GM12878 (cell line): ENCODE measurements at regions of chr1 and their contacts with region 1.

Region 1: DNA sequence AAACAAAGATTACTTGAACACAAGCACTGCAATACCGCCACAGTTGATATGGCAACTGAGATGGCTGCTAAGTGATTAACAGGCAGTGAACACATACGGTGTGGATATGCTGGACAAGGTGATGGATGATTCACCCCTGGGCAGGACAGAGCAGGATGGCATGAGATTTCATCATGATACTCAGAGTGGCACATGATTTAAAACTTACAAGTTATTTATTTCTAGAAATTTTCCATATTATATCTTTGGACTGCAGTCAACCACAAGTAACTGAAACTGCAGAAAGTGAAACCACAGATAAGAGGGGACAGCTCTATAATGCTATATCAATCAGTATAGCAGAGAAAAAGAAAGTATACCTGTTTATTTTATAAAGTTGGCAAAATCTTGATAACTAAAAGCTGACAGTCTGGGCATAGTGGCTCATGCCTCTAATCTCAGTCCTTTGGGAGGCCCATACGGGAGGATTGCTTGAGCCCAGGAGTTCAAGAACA is 47.9 kb downstream of the PHACTR4 start:
- DNase-seq: no peak
- ATAC-seq: peak; percentile 94
- H3K4me3 ChIP-seq: peak overlapping the region; percentile 48; the same call in 1 of the 2 replicates
- H3K27ac ChIP-seq: peak overlapping the region; percentile 50; the same call in 1 of the 2 replicates
- H3K4me1 ChIP-seq: peaks cover 7% of the 10 kb centered on the region
- H3K27me3 ChIP-seq: no peaks in the 10 kb centered on the region
- CTCF ChIP-seq: no peak
- EP300 ChIP-seq: no peak
- POLR2A ChIP-seq: no peak
- RAD21 ChIP-seq: no peak

Region 2: GRCh38 chr1:27689423-27690173 is 727.9 kb before region 1 on chr1:
- CTCF ChIA-PET with region 1: no interaction called
- POLR2A ChIA-PET with region 1: no interaction called
- RAD21 ChIA-PET with region 1: no interaction called
- SMC1A ChIA-PET with region 1: no interaction called
- in situ Hi-C with region 1: no loop called
- intact Hi-C with region 1: no loop called
- DNase-seq: peak; percentile 60
- ATAC-seq: peak; percentile 88
- H3K4me3 ChIP-seq: peak overlapping the region; percentile 33; the same call in 1 of the 2 replicates
- H3K27ac ChIP-seq: peak overlapping the region; percentile 57
- H3K4me1 ChIP-seq: peaks cover 10% of the 10 kb centered on the region
- H3K27me3 ChIP-seq: no peaks in the 10 kb centered on the region
- CTCF ChIP-seq: no peak
- EP300 ChIP-seq: peak in 1 of 2 experiments; percentile 13; a peak in 1 of 4 replicates
- POLR2A ChIP-seq: no peak
- RAD21 ChIP-seq: no peak

Region 3: DNA sequence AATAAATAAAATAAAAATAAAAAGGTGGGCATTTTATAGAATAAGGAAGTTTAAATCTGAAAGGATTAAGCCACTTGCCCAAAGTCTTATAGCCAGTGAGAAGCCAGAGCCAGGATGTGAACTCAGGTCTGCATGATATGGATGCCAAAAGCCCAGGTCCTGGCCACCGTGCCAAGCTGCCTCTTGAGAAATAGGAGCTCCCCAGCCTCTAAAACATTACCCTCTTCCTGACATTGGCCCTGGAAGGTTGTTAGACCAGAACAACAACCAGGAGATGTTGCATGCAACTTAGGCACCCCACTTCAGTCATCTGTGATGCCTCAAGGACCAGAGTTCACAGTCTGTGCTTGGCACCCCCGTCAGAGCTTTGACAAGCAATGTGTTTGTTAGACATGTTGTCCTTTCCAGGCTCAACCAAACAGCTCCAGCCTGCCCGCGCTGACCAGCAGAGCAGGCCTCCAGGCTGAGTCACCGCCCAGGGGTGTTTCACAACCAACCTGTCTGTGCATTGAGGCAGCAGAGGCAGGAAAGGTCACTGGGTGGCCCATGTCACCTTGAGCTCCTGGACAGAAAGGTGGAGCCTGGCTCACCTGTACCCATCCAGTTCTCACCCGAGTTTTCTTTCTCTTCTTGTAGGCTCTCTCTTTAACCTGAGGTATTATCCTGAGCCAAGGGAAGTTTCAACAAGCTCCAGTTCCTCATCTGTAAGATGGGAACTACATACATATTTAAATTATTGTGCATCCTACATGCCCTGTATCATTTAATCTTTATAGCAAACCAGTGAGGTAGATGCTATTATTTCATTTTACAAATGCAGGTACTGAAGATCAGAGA is 103.5 kb before region 1 on chr1:
- CTCF ChIA-PET with region 1: no interaction called
- POLR2A ChIA-PET with region 1: no interaction called
- RAD21 ChIA-PET with region 1: no interaction called
- SMC1A ChIA-PET with region 1: no interaction called
- in situ Hi-C with region 1: no loop called
- intact Hi-C with region 1: no loop called
- DNase-seq: no peak
- ATAC-seq: no peak
- H3K4me3 ChIP-seq: no peak overlapping the region
- H3K27ac ChIP-seq: no peak overlapping the region
- H3K4me1 ChIP-seq: no peaks in the 10 kb centered on the region
- H3K27me3 ChIP-seq: no peaks in the 10 kb centered on the region
- CTCF ChIP-seq: no peak
- EP300 ChIP-seq: no peak
- POLR2A ChIP-seq: no peak
- RAD21 ChIP-seq: no peak

Region 4: DNA sequence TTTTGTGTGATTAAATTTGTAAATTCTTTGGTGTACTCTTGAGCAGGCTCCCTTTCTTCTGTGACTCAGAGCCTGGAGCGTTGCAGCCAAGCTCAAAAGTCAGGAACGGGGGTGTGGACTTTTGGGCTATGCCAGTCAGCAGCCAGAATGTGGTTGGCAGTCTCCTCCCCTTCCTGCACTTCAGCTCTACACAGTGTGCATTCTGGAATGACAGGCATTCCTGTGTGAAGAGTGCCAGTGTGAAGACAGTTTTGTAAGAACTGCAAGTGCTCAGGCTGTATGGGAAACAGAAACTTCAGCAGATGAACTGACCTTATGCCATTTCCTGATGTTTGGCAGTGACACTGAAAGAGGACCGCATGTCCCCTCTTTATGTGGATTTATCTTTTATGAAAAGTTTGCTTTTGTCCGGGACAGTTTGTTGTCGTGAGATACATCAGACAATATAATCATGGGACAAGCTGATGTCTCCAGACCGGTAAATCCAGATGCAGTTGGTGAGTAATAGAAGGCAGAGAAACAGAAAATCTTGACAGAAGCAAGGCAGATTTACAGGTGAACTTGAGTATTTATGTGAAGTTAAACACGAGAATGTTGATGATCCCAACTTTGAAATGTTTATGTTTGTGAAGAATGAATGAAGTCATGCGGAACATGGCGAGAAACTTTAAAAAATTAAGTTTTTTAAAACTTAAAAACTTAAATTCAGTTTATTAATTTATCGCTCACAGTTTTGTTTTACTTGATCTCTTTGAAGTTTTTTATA is 20.6 kb after region 1 on chr1:
- CTCF ChIA-PET with region 1: interaction called, 7 read pairs
- POLR2A ChIA-PET with region 1: interaction called, 12 read pairs
- RAD21 ChIA-PET with region 1: interaction called, 3 read pairs
- SMC1A ChIA-PET with region 1: interaction called, 5 read pairs
- in situ Hi-C with region 1: no loop called
- intact Hi-C with region 1: no loop called
- DNase-seq: no peak
- ATAC-seq: peak; percentile 71
- H3K4me3 ChIP-seq: peak overlapping the region; percentile 51; the same call in 1 of the 2 replicates
- H3K27ac ChIP-seq: peak overlapping the region; percentile 54
- H3K4me1 ChIP-seq: peaks cover 6% of the 10 kb centered on the region
- H3K27me3 ChIP-seq: no peaks in the 10 kb centered on the region
- CTCF ChIP-seq: no peak
- EP300 ChIP-seq: no peak
- POLR2A ChIP-seq: peak; percentile 38; the same call in 1 of the 2 replicates
- RAD21 ChIP-seq: no peak

Region 5: GRCh38 chr1:28680141-28680540 is 262.7 kb after region 1 on chr1:
- CTCF ChIA-PET with region 1: no interaction called
- POLR2A ChIA-PET with region 1: no interaction called
- RAD21 ChIA-PET with region 1: no interaction called
- SMC1A ChIA-PET with region 1: no interaction called
- in situ Hi-C with region 1: no loop called
- intact Hi-C with region 1: no loop called
- DNase-seq: no peak
- ATAC-seq: no peak
- H3K4me3 ChIP-seq: no peak overlapping the region
- H3K27ac ChIP-seq: no peak overlapping the region
- H3K4me1 ChIP-seq: no peaks in the 10 kb centered on the region
- H3K27me3 ChIP-seq: no peaks in the 10 kb centered on the region
- CTCF ChIP-seq: no peak
- EP300 ChIP-seq: no peak
- POLR2A ChIP-seq: no peak
- RAD21 ChIP-seq: no peak